ENCODE measurements at regions of chr5 and their contacts with region 1.

Region 1: DNA sequence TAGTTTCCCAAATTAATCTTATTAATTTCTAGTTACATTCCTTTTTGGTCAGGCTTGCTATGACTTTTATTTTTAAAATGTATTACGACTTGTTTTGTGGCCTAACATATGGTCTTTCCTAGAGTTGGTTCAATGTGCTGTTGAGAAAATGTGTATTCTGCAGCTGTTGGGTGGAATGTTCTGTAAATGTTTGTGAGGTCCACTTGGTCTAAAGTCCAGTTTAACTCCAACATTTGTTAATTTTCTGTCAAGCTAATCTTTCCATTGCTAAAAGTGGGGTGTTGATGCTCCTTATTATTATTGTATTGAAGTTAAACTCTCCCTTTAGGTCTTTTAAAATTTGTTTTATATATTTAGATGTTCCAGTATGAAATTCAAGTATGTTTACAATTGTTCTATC is 1010.8 kb upstream of the EDIL3 start:
- DNase-seq: no peak
- ATAC-seq: no peak
- H3K4me3 ChIP-seq: no peak overlapping the region
- H3K4me3 Mint-ChIP-seq: no peak overlapping the region
- H3K27ac ChIP-seq: no peak overlapping the region
- H3K27ac Mint-ChIP-seq: no peak overlapping the region
- H3K4me1 ChIP-seq: no peaks in the 10 kb centered on the region
- H3K4me1 Mint-ChIP-seq: no peaks in the 10 kb centered on the region
- H3K27me3 ChIP-seq: no peaks in the 10 kb centered on the region
- H3K27me3 Mint-ChIP-seq: no peaks in the 10 kb centered on the region
- CTCF ChIP-seq: no peak

Region 2: DNA sequence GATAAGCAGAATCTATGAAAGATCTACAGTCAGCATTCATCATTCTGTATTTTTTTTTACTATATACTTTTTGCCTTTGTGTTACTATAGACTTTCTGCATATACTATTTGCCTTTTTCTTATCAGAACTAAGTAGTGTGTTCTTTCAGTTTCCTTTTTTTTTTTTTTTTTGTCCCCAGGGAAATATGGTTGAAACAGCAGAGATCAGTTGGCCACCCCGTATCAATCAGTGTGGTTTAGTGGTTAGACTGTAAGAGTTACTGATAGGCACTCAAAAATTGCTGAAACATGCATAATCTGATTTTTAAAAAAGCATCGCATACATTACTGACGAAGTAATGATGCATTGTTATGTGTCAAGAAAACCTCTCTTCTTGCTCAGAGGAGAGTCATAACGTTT is 20.0 kb before region 1 on chr5:
- CTCF ChIA-PET with region 1: no interaction called
- POLR2A ChIA-PET with region 1: no interaction called
- intact Hi-C with region 1: loop called in 1 of 2 experiments (anchors 2 kb)
- DNase-seq: no peak
- ATAC-seq: no peak
- H3K4me3 ChIP-seq: no peak overlapping the region
- H3K4me3 Mint-ChIP-seq: no peak overlapping the region
- H3K27ac ChIP-seq: no peak overlapping the region
- H3K27ac Mint-ChIP-seq: no peak overlapping the region
- H3K4me1 ChIP-seq: no peaks in the 10 kb centered on the region
- H3K4me1 Mint-ChIP-seq: no peaks in the 10 kb centered on the region
- H3K27me3 ChIP-seq: no peaks in the 10 kb centered on the region
- H3K27me3 Mint-ChIP-seq: no peaks in the 10 kb centered on the region
- CTCF ChIP-seq: no peak